CD14-positive monocyte (primary cell): ENCODE measurements at regions of chr11 and their contacts with region 1.

Region 1: GRCh38 chr11:62004473-62004872 is 37.0 kb upstream of the FTH1 start:
- DNase-seq: peak; percentile 83 to 97 (median 86)
- H3K4me3 ChIP-seq: peak overlapping the region in 1 of 3 experiments; percentile 17
- H3K4me3 Mint-ChIP-seq: peak overlapping the region in 1 of 2 donors; percentile 40
- H3K27ac ChIP-seq: peak overlapping the region; percentile 63 to 74
- H3K27ac Mint-ChIP-seq: peak overlapping the region; percentile 84 to 95 (median 87)
- H3K4me1 ChIP-seq: peaks cover 20 to 27% of the 10 kb centered on the region in 2 donors
- H3K4me1 Mint-ChIP-seq: peaks cover 25% of the 10 kb centered on the region
- H3K27me3 ChIP-seq: no peaks in the 10 kb centered on the region
- H3K27me3 Mint-ChIP-seq: peaks cover 2 to 4% (median 3%) of the 10 kb centered on the region in 3 donors
- CTCF ChIP-seq: no peak

Region 2: DNA sequence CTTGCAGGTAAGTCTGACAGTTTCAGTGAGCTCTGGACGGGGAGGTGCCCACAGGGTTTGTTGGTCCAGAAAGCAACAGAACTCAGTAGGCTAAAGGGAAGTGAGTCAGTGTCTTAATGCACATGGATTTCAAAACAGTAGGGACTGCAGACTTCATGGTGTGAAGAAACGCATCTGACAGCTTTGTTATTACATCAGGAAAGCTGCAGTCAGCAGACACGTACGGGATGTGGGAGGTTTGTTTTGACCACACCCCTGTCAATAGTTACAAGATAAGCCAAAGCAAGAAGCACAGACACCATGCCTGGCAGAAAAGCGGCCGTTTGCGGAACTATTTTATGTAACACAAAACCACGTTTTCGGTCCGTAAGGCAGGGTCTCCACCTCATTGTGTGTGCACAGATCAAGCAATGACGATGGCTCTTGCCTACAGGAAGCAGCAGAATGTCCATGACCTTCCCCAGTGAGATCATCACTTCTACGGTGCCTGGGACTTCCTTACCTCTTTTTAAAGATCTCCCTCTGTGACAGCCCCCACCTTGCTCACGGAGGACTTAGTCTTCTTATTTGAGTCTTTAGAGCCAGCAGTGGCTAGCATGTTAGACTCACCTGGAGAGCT is 21.1 kb after region 1 on chr11:
- intact Hi-C with region 1: loop called in 1 of 2 experiments (anchors 2 kb)
- DNase-seq: peak; percentile 99 to 100 (median 100)
- H3K4me3 ChIP-seq: peak overlapping the region in 2 of 3 experiments; percentile 25 to 34
- H3K4me3 Mint-ChIP-seq: peak overlapping the region; percentile 69 to 76
- H3K27ac ChIP-seq: peak overlapping the region; percentile 97 to 99
- H3K27ac Mint-ChIP-seq: peak overlapping the region; percentile 98 to 100 (median 99)
- H3K4me1 ChIP-seq: peaks cover 31% of the 10 kb centered on the region in 2 donors
- H3K4me1 Mint-ChIP-seq: peaks cover 32% of the 10 kb centered on the region
- H3K27me3 ChIP-seq: no peaks in the 10 kb centered on the region
- H3K27me3 Mint-ChIP-seq: peaks cover 2 to 6% (median 3%) of the 10 kb centered on the region in 3 donors
- CTCF ChIP-seq: no peak

Region 3: GRCh38 chr11:62069986-62070919 is 65.8 kb after region 1 on chr11:
- intact Hi-C with region 1: no loop called
- DNase-seq: no peak
- H3K4me3 ChIP-seq: no peak overlapping the region
- H3K4me3 Mint-ChIP-seq: no peak overlapping the region
- H3K27ac ChIP-seq: no peak overlapping the region
- H3K27ac Mint-ChIP-seq: peak overlapping the region in 1 of 7 donors; percentile 31
- H3K4me1 ChIP-seq: no peaks in the 10 kb centered on the region
- H3K4me1 Mint-ChIP-seq: no peaks in the 10 kb centered on the region
- H3K27me3 ChIP-seq: no peaks in the 10 kb centered on the region
- H3K27me3 Mint-ChIP-seq: peaks cover 0 to 7% (median 2%) of the 10 kb centered on the region in 3 donors
- CTCF ChIP-seq: no peak